Endothelial cell of umbilical vein (primary cell): ENCODE measurements at regions of chr12 and their contacts with region 1.

Region 1: DNA sequence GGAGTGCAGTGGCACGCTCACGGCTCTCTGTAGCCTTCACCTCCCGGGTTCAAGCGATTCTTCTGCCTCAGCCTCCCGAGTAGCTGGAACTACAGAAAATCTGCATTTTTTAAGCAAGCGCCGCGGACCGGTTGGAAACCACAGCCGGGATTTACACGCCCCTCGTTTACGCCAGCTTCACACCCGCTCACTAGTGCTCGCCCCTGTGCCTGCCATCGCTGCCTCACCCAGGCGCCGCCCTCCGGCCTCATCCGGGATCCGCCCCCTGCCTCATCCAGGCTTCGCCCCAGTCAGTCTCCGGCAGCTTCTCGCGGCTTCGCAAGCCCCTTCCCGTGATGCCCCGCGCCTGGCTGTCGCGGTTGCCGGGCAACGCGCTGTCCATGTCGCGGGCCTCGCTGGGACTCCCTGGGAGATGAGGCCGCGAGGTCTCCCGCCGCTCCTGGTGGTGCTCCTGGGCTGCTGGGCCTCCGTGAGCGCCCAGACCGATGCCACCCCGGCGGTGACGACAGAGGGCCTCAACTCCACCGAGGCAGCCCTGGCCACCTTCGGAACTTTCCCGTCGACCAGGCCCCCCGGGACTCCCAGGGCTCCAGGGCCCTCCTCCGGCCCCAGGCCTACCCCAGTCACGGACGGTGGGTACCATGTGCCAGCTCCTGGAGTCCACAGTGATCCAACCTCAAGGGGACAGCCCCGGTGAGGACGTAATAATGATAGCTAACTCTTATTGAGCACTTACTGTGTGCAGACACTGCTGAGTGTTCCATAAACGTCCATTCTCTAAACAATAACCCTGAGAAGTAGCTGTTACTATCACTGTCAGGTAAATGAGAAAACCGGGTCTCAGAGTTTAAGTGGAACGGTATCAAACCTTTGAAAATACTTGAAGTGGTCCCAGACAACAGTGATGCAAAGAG is at the start of gene TCTN1:
- DNase-seq: peak; percentile 96
- H3K4me3 ChIP-seq: peak within 1 kb of the TSS; percentile 23 to 59 (median 51)
- H3K27ac ChIP-seq: no peak within 1 kb of the TSS
- H3K4me1 ChIP-seq: peaks cover 4% of the 10 kb centered on the region
- H3K27me3 ChIP-seq: no peaks in the 10 kb centered on the region
- CTCF ChIP-seq: no peak
- POLR2A ChIP-seq: peak; percentile 72
- total RNA-seq, gene TCTN1: 20.1 and 21.1 TPM in 2 replicates

Region 2: DNA sequence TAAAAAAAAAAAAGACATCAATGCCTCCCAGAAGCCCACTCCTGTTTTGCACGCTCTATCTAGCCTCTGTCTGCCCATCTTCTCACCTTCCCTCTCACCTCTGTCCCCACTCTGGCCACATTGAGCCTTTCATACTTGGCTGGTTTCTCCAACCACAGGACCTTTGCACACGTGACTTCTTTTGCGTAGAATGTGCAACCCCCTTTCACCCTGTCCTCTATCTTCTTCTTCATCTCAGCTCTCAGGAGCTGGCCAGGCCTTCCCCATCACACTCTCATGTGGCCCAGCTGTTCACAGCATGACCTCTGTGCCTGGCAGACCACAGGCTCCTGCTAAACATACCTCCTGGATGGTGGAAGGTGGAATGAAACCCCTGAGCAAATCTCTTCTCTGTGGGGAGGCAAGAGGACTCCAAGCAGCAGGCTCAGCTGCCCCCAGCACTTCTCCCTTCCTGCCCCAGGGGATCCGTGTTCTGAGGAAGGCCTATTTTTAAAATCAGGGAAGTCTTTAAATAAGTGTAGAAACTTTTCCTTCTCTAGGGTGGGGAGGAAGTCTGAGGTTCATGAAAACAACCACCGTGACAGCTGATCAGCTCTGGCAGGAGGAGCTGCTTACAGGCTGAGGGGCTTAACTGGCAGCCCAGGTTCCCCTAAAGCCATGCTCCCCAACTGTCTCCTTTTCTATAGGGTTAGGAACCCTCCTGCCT is 63.3 kb after region 1 on chr12:
- CTCF ChIA-PET with region 1: no interaction called
- POLR2A ChIA-PET with region 1: no interaction called
- dilution Hi-C with region 1: no loop called
- intact Hi-C with region 1: no loop called
- DNase-seq: no peak
- H3K4me3 ChIP-seq: no peak overlapping the region
- H3K27ac ChIP-seq: no peak overlapping the region
- H3K4me1 ChIP-seq: no peaks in the 10 kb centered on the region
- H3K27me3 ChIP-seq: no peaks in the 10 kb centered on the region
- CTCF ChIP-seq: no peak
- POLR2A ChIP-seq: no peak

Region 3: GRCh38 chr12:110698171-110698902 is 84.3 kb after region 1 on chr12:
- CTCF ChIA-PET with region 1: interaction called, 3 read pairs
- POLR2A ChIA-PET with region 1: no interaction called
- dilution Hi-C with region 1: no loop called
- intact Hi-C with region 1: loop called (anchors 1 kb)
- DNase-seq: peak; percentile 92
- H3K4me3 ChIP-seq: no peak overlapping the region
- H3K27ac ChIP-seq: peak overlapping the region; percentile 36
- H3K4me1 ChIP-seq: peaks cover 5% of the 10 kb centered on the region
- H3K27me3 ChIP-seq: no peaks in the 10 kb centered on the region
- CTCF ChIP-seq: peak; percentile 67 to 81
- POLR2A ChIP-seq: peak; percentile 24

Region 4: DNA sequence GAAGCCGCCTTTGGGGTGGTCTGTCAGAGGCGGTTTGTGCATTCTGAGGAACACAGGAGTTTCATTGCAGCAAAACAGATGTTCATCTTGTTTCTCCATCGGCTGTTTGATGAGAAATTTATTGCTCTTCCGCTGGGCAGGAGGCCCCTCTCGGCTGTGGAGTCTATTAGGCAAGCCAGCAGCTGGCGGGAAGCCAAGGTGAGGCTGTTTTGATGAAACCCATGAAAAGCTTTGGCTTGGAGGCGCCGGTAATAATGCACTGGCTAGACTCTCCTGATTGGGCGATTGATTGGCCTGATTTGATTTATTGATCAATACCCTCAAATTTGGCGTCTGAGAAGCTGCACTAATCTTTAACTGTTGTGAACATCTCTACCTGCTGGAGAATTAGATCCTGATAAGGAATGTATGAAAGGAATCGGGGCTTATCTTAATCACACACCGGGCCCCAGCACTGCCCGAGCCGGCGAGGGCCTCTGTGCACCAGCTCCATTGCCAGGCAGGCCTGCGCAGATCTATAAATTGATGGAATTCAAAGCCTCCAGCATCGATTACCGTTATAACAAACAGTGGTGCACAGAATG is 567.2 kb after region 1 on chr12:
- CTCF ChIA-PET with region 1: no interaction called
- POLR2A ChIA-PET with region 1: no interaction called
- dilution Hi-C with region 1: no loop called
- intact Hi-C with region 1: no loop called
- DNase-seq: no peak
- H3K4me3 ChIP-seq: no peak overlapping the region
- H3K27ac ChIP-seq: no peak overlapping the region
- H3K4me1 ChIP-seq: no peaks in the 10 kb centered on the region
- H3K27me3 ChIP-seq: no peaks in the 10 kb centered on the region
- CTCF ChIP-seq: no peak
- POLR2A ChIP-seq: no peak